ENCODE measurements at regions of chr2 and their contacts with region 1.

Region 1: GRCh38 chr2:156332534-156333273 is at the start of gene NR4A2:
- DNase-seq: peak; percentile 95
- ATAC-seq: peak; percentile 63
- H3K4me3 Mint-ChIP-seq: peak within 1 kb of the TSS; percentile 85
- H3K27ac Mint-ChIP-seq: peak within 1 kb of the TSS; percentile 94
- H3K4me1 Mint-ChIP-seq: peaks cover 46% of the 10 kb centered on the region
- H3K27me3 Mint-ChIP-seq: peaks cover 8% of the 10 kb centered on the region
- total RNA-seq, gene NR4A2: 19.1 to 23.0 TPM

Region 2: DNA sequence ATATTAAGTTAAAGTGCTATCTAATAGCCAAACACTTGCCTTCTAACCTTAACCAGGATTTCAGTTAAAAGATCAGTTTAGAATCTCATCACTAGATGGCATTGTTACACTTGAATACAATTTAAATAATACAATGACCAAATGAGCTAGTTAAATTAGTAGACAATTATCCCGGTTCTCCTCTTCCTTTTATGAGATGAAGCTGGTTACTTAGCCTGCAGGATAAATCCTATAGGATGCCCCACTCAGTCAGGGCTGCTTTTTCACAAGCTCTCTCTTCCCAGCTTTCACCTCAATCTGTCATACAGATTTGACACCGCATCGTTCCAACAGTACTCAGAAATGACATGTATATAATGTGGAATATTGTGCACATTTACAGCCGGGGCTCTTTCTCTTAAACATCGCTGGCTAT is 955.4 kb before region 1 on chr2:
- CTCF ChIA-PET with region 1: no interaction called
- POLR2A ChIA-PET with region 1: no interaction called
- intact Hi-C with region 1: loop called (anchors 10 kb)
- DNase-seq: no peak
- ATAC-seq: no peak
- H3K4me3 Mint-ChIP-seq: no peak overlapping the region
- H3K27ac Mint-ChIP-seq: no peak overlapping the region
- H3K4me1 Mint-ChIP-seq: peaks cover 13% of the 10 kb centered on the region
- H3K27me3 Mint-ChIP-seq: peaks cover 2% of the 10 kb centered on the region

Region 3: DNA sequence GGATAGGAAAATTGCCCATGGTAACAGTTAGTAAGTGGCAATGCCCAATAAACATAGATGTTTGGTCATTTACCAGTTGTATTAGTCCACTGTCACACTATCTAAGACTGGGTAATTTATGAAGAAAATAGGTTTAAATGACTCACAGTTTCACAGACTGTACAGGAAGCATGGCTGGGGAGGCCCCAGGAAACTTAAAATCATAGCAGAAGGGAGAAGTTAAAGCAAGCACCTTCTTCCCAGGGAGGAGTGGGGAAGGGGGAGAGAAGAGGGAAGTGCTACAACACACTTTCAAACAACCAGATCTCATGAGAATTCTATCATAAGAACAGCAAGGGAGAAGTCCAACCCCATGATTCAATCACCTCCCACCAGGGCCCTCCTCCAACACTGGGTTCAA is 23.5 kb before region 1 on chr2:
- CTCF ChIA-PET with region 1: no interaction called
- POLR2A ChIA-PET with region 1: no interaction called
- intact Hi-C with region 1: no loop called
- DNase-seq: no peak
- ATAC-seq: peak; percentile 63
- H3K4me3 Mint-ChIP-seq: no peak overlapping the region
- H3K27ac Mint-ChIP-seq: no peak overlapping the region
- H3K4me1 Mint-ChIP-seq: peaks cover 7% of the 10 kb centered on the region
- H3K27me3 Mint-ChIP-seq: peaks cover 31% of the 10 kb centered on the region

Region 4: GRCh38 chr2:156385242-156385641 is 52.5 kb after region 1 on chr2:
- CTCF ChIA-PET with region 1: interaction called, 9 read pairs
- POLR2A ChIA-PET with region 1: interaction called, 5 read pairs
- intact Hi-C with region 1: loop called in 1 of 2 experiments (anchors 2 kb)
- DNase-seq: peak; percentile 43
- ATAC-seq: peak; percentile 85
- H3K4me3 Mint-ChIP-seq: peak overlapping the region; percentile 14
- H3K27ac Mint-ChIP-seq: peak overlapping the region; percentile 82
- H3K4me1 Mint-ChIP-seq: peaks cover 29% of the 10 kb centered on the region
- H3K27me3 Mint-ChIP-seq: peaks cover 2% of the 10 kb centered on the region

Region 5: GRCh38 chr2:156526950-156527636 is 194.4 kb after region 1 on chr2:
- CTCF ChIA-PET with region 1: no interaction called
- POLR2A ChIA-PET with region 1: interaction called, 3 read pairs
- intact Hi-C with region 1: loop called in 1 of 2 experiments (anchors 5 kb)
- DNase-seq: no peak
- ATAC-seq: peak; percentile 78
- H3K4me3 Mint-ChIP-seq: no peak overlapping the region
- H3K27ac Mint-ChIP-seq: no peak overlapping the region
- H3K4me1 Mint-ChIP-seq: peaks cover 10% of the 10 kb centered on the region
- H3K27me3 Mint-ChIP-seq: no peaks in the 10 kb centered on the region

Region 6: GRCh38 chr2:157261199-157261783 is 928.6 kb after region 1 on chr2:
- CTCF ChIA-PET with region 1: no interaction called
- POLR2A ChIA-PET with region 1: no interaction called
- intact Hi-C with region 1: loop called in 1 of 2 experiments (anchors 5 kb)
- DNase-seq: peak; percentile 84
- ATAC-seq: peak; percentile 79
- H3K4me3 Mint-ChIP-seq: peak overlapping the region; percentile 4
- H3K27ac Mint-ChIP-seq: peak overlapping the region; percentile 26
- H3K4me1 Mint-ChIP-seq: peaks cover 38% of the 10 kb centered on the region
- H3K27me3 Mint-ChIP-seq: peaks cover 12% of the 10 kb centered on the region

Region 7: DNA sequence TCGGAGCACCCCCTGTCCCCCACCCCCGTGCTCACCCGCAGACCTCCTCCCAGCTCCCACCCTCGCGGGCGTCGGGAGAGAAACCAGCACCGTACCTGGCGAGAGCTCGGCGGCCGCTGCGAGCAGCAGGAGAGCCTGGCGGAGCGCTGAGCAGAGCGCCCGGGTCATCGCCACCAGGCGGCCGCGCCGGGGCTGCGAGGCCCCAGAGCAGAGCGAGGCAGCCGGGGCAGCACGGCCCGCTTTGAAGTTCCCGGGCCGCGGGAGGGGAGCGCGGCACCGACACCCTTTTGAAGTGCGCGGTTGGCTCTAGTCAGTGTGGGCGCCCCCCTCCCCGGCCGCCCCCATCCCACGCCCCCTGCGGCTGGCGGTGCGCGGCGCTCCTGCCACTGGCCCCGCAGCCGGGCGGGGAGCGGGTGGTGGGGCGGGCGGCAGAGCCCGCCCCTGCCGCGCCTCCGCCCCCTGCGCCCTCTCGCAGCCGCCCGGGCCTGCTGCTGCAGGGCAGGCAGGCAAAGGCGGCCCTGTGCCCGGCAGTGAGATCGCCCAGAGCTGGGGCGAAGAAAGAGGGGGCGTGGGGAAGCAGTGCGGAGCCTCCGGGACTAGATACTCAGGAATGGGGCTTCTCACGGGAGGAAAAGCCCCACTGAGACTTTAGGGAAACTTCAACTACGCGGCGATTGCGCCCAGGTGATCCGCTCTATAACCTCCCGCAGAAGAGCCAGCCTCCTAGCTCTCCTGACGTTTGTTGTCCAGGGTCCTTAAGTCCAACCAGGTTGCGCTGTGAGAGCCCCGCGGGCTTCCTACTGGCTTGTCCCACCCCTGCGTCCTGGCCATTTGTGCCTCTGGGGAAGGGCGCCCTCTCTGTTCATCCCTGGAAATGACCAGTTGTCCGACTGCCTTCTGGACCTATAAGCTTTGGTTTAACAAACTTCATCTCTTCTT is 1296.0 kb after region 1 on chr2 and contains the start of gene ACVR1C:
- CTCF ChIA-PET with region 1: no interaction called
- POLR2A ChIA-PET with region 1: no interaction called
- intact Hi-C with region 1: loop called in 1 of 2 experiments (anchors 10 kb)
- DNase-seq: peak; percentile 80
- ATAC-seq: peak; percentile 82
- H3K4me3 Mint-ChIP-seq: peak within 1 kb of the TSS; percentile 76
- H3K27ac Mint-ChIP-seq: peak within 1 kb of the TSS; percentile 23
- H3K4me1 Mint-ChIP-seq: peaks cover 34% of the 10 kb centered on the region
- H3K27me3 Mint-ChIP-seq: peaks cover 5% of the 10 kb centered on the region
- total RNA-seq, gene ACVR1C: 1.6 to 1.7 TPM